ENCODE measurements at regions of chr1 and their contacts with region 1.

Region 1: GRCh38 chr1:43454266-43455011 is 708 bp upstream of the HYI start:
- DNase-seq: peak; percentile 65 to 78 (median 68)
- H3K4me3 ChIP-seq: peak overlapping the region; percentile 10 to 36
- H3K4me3 Mint-ChIP-seq: peak overlapping the region; percentile 88 to 92 (median 89)
- H3K27ac ChIP-seq: peak overlapping the region; percentile 4
- H3K27ac Mint-ChIP-seq: peak overlapping the region; percentile 70 to 93 (median 89)
- H3K4me1 ChIP-seq: peaks cover 12% of the 10 kb centered on the region
- H3K4me1 Mint-ChIP-seq: peaks cover 12 to 29% (median 21%) of the 10 kb centered on the region in 4 donors
- H3K27me3 ChIP-seq: no peaks in the 10 kb centered on the region
- H3K27me3 Mint-ChIP-seq: peaks cover 0 to 4% of the 10 kb centered on the region in 2 donors

Region 2: DNA sequence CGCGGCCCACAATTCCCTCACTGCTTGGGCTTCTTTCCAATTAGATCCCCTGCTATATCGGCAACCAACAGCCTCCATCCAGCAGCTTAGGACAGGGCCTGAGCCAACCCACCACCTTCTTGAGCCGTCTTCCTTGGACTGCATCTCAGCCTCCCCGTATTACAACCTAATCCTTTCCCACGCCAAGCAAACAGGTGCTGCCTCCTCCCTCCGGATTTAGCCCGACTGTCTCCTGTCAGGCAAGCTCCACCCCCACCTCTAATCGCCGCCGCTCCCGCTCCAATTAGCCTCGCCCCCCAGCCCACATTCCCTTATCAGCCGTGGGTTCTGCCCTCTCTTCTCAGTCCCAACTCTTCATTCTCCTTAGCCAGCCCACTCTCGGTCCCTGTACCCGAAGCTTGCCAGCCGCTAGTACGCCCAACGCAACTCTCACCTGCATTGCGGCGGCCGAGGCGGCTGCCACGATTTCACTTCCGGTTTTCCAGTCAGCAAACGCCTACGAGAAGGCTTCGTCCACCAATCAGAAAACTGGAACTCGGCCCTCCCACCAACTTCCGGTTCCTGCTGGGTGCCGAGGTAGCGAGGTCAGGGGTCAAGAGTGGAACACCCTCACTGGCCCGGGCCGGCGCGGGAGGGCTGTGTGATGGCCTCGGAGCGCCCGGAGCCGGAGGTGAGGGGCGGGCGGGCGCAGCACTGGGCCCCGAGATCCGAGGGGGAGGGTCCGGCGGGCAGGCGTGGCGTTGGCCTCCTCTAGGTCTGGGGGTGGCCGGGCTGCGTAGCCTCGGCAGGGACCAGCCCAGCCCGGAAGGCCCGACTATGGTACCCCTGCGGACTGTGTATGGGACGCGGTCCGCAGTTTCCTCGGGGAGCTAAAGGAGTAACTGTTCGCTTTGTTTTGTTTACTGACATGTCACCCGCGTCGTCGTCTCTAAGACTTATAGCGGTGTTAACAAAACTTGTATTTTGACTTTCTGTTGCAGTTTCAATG is 64.8 kb before region 1 on chr1 and contains the starts of genes MED8 and SZT2:
- CTCF ChIA-PET with region 1: no interaction called
- POLR2A ChIA-PET with region 1: interaction called, 18 read pairs
- intact Hi-C with region 1: no loop called
- DNase-seq: peak; percentile 88 to 93 (median 91)
- H3K4me3 ChIP-seq: peak within 1 kb of the TSS; percentile 87 to 88
- H3K4me3 Mint-ChIP-seq: peak within 1 kb of the TSS; percentile 99 to 100 (median 100)
- H3K27ac ChIP-seq: peak within 1 kb of the TSS; percentile 82
- H3K27ac Mint-ChIP-seq: peak within 1 kb of the TSS; percentile 89 to 100 (median 99)
- H3K4me1 ChIP-seq: peaks cover 28% of the 10 kb centered on the region
- H3K4me1 Mint-ChIP-seq: peaks cover 32 to 60% (median 45%) of the 10 kb centered on the region in 4 donors
- H3K27me3 ChIP-seq: no peaks in the 10 kb centered on the region
- H3K27me3 Mint-ChIP-seq: no peaks in the 10 kb centered on the region
- total RNA-seq, gene MED8: 34.0 to 35.6 TPM
- total RNA-seq, gene SZT2: 135 to 153 TPM

Region 3: GRCh38 chr1:43473463-43473862 is 19.0 kb after region 1 on chr1:
- CTCF ChIA-PET with region 1: no interaction called
- POLR2A ChIA-PET with region 1: no interaction called
- intact Hi-C with region 1: no loop called
- DNase-seq: no peak
- H3K4me3 ChIP-seq: no peak overlapping the region
- H3K4me3 Mint-ChIP-seq: no peak overlapping the region
- H3K27ac ChIP-seq: no peak overlapping the region
- H3K27ac Mint-ChIP-seq: no peak overlapping the region
- H3K4me1 ChIP-seq: no peaks in the 10 kb centered on the region
- H3K4me1 Mint-ChIP-seq: no peaks in the 10 kb centered on the region
- H3K27me3 ChIP-seq: no peaks in the 10 kb centered on the region
- H3K27me3 Mint-ChIP-seq: peaks cover 2 to 8% of the 10 kb centered on the region in 2 donors

Region 4: DNA sequence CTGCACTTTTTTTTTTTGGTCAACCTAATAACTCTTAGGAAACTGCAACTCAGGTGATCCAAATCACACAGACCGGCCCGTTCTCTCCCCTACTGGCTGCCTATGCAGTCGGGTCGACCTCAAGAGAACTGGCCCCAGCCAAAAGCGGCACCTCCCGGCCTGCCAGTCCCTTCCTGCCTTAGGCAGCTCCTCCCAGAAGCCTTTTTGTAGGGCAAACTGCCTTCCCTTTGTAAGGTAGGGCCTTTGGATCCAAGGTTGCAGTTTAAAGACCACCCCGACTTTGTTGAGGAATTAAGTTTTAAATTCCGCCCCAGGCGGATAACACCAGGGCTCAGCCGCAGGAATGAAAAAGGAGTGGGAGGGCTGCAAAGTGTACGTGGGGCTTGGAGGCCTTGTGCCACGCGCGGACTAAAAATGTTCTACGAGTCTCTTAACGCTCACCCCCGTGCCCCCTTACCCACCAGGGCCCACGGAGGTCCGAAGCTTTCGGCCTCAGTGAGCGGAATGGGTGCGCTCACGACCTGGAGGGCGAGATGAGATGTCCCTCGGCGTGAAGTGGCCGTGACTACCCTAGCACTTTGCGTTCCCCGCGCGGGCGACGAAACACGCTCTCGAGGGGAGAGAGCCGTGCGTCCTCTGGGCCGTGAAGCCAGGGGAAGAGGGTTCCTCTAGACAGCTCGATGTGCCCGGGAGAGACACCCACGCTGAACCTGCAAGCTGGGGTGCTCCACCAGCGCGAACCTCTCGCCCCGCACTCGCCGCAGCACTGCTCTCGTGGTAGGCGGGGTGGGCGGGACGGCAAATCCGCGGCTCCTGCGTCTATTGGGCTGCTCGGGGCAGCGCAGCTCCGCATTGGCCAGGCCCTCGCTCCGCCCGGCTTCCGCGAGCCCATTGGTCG is 252.4 kb after region 1 on chr1:
- CTCF ChIA-PET with region 1: no interaction called
- POLR2A ChIA-PET with region 1: no interaction called
- intact Hi-C with region 1: loop called (anchors 5 kb)
- DNase-seq: peak; percentile 87 to 91 (median 89)
- H3K4me3 ChIP-seq: peak overlapping the region; percentile 24 to 79
- H3K4me3 Mint-ChIP-seq: peak overlapping the region; percentile 85 to 94 (median 90)
- H3K27ac ChIP-seq: peak overlapping the region; percentile 55
- H3K27ac Mint-ChIP-seq: peak overlapping the region; percentile 38 to 79 (median 77)
- H3K4me1 ChIP-seq: peaks cover 16% of the 10 kb centered on the region
- H3K4me1 Mint-ChIP-seq: peaks cover 13 to 32% (median 24%) of the 10 kb centered on the region in 4 donors
- H3K27me3 ChIP-seq: no peaks in the 10 kb centered on the region
- H3K27me3 Mint-ChIP-seq: no peaks in the 10 kb centered on the region

Measured in CD4-positive, alpha-beta memory T cell (primary cell).